ENCODE measurements at regions of chr15 and their contacts with region 1.

Region 1: GRCh38 chr15:86611417-86612040 is 531.9 kb downstream of the AGBL1 start:
- DNase-seq: peak; percentile 47 to 64 (median 58)
- H3K4me3 ChIP-seq: no peak overlapping the region
- H3K4me3 Mint-ChIP-seq: peak overlapping the region in 7 of 8 donors; percentile 22 to 76 (median 55)
- H3K27ac ChIP-seq: no peak overlapping the region
- H3K27ac Mint-ChIP-seq: peak overlapping the region; percentile 34 to 77 (median 61)
- H3K4me1 ChIP-seq: peaks cover 65% of the 10 kb centered on the region
- H3K4me1 Mint-ChIP-seq: peaks cover 46 to 74% (median 52%) of the 10 kb centered on the region in 4 donors
- H3K27me3 ChIP-seq: no peaks in the 10 kb centered on the region
- H3K27me3 Mint-ChIP-seq: peaks cover 0 to 2% of the 10 kb centered on the region in 2 donors

Region 2: GRCh38 chr15:86384186-86384585 is 227.3 kb before region 1 on chr15:
- CTCF ChIA-PET with region 1: no interaction called
- POLR2A ChIA-PET with region 1: no interaction called
- intact Hi-C with region 1: no loop called
- DNase-seq: no peak
- H3K4me3 ChIP-seq: no peak overlapping the region
- H3K4me3 Mint-ChIP-seq: no peak overlapping the region
- H3K27ac ChIP-seq: no peak overlapping the region
- H3K27ac Mint-ChIP-seq: no peak overlapping the region
- H3K4me1 ChIP-seq: no peaks in the 10 kb centered on the region
- H3K4me1 Mint-ChIP-seq: peaks cover 0 to 4% (median 2%) of the 10 kb centered on the region in 4 donors
- H3K27me3 ChIP-seq: no peaks in the 10 kb centered on the region
- H3K27me3 Mint-ChIP-seq: peaks cover 7 to 16% of the 10 kb centered on the region in 2 donors

Region 3: GRCh38 chr15:86650093-86650492 is 38.6 kb after region 1 on chr15:
- CTCF ChIA-PET with region 1: interaction called, 6 read pairs
- POLR2A ChIA-PET with region 1: interaction called, 16 read pairs
- intact Hi-C with region 1: loop called (anchors 5 kb)
- DNase-seq: no peak
- H3K4me3 ChIP-seq: no peak overlapping the region
- H3K4me3 Mint-ChIP-seq: no peak overlapping the region
- H3K27ac ChIP-seq: no peak overlapping the region
- H3K27ac Mint-ChIP-seq: no peak overlapping the region
- H3K4me1 ChIP-seq: peaks cover 51% of the 10 kb centered on the region
- H3K4me1 Mint-ChIP-seq: peaks cover 40 to 54% (median 47%) of the 10 kb centered on the region in 4 donors
- H3K27me3 ChIP-seq: no peaks in the 10 kb centered on the region
- H3K27me3 Mint-ChIP-seq: no peaks in the 10 kb centered on the region

Region 4: DNA sequence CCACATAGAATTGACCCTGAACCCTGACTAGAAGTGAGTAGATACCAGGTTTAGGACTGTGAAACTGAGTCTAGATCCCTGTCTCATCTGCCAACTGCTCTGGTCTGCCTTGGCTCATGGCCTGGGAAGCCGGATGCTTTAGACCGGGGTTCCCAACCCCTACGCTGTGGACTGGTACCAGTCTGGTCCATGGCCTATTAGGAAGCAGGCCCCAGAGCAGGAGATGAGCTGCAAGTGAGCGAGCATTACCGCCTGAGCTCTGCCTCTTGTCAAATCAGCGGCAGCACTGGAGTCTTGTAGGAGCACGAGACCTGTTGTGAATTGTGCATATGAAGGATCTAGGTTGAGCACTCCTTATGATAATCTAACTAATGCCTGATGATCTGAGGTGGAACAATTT is 202.4 kb after region 1 on chr15:
- CTCF ChIA-PET with region 1: no interaction called
- POLR2A ChIA-PET with region 1: no interaction called
- intact Hi-C with region 1: no loop called
- DNase-seq: no peak
- H3K4me3 ChIP-seq: no peak overlapping the region
- H3K4me3 Mint-ChIP-seq: no peak overlapping the region
- H3K27ac ChIP-seq: no peak overlapping the region
- H3K27ac Mint-ChIP-seq: no peak overlapping the region
- H3K4me1 ChIP-seq: no peaks in the 10 kb centered on the region
- H3K4me1 Mint-ChIP-seq: no peaks in the 10 kb centered on the region
- H3K27me3 ChIP-seq: no peaks in the 10 kb centered on the region
- H3K27me3 Mint-ChIP-seq: peaks cover 2 to 6% of the 10 kb centered on the region in 2 donors

Region 5: DNA sequence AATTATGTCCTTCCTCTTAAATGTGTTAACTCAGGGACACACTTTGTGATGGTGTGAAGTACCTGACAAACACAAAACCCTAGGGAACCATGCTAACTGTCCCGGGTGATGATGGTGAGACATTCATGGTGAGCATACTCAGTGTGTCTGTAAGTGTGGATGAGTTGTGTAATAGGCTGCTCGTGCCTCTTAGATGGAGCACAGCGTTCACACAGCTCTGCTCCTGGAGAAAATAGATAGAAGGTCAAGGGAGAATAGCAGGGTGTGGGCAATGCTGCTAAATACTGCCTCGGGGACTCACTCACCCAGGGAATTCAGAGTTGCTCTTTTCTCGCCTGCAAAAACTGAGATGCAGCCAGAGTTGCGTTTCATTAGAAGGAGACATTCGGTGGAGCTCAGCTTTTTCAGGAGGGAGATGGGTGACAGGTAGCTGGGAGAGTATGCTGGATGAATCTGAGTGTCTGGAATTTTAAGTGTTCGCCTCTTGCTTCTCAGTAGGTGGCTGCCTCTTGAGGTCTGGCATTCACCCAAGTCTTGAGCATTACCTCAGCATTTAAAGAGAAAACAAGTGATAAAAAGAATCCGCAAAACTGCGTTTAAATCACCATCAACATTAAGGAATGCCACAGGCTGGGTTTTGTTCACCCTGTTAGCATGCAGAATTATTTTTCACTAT is 281.4 kb after region 1 on chr15:
- CTCF ChIA-PET with region 1: no interaction called
- POLR2A ChIA-PET with region 1: no interaction called
- intact Hi-C with region 1: no loop called
- DNase-seq: no peak
- H3K4me3 ChIP-seq: no peak overlapping the region
- H3K4me3 Mint-ChIP-seq: no peak overlapping the region
- H3K27ac ChIP-seq: no peak overlapping the region
- H3K27ac Mint-ChIP-seq: no peak overlapping the region
- H3K4me1 ChIP-seq: no peaks in the 10 kb centered on the region
- H3K4me1 Mint-ChIP-seq: no peaks in the 10 kb centered on the region
- H3K27me3 ChIP-seq: no peaks in the 10 kb centered on the region
- H3K27me3 Mint-ChIP-seq: peaks cover 0 to 8% of the 10 kb centered on the region in 2 donors

Measured in CD4-positive, alpha-beta memory T cell (primary cell).